ENCODE measurements at regions of chr10 and their contacts with region 1.

Region 1: GRCh38 chr10:51422311-51423120 is 276.9 kb downstream of the CSTF2T start:
- DNase-seq: peak; percentile 68 to 88 (median 77)
- H3K4me3 ChIP-seq: no peak overlapping the region
- H3K27ac ChIP-seq: peak overlapping the region in 3 of 5 donors; percentile 11 to 44 (median 13)
- H3K4me1 ChIP-seq: peaks cover 0 to 12% of the 10 kb centered on the region in 2 donors
- H3K27me3 ChIP-seq: no peaks in the 10 kb centered on the region
- CTCF ChIP-seq: peak; percentile 72 to 85 (median 78)
- POLR2A ChIP-seq: no peak

Region 2: DNA sequence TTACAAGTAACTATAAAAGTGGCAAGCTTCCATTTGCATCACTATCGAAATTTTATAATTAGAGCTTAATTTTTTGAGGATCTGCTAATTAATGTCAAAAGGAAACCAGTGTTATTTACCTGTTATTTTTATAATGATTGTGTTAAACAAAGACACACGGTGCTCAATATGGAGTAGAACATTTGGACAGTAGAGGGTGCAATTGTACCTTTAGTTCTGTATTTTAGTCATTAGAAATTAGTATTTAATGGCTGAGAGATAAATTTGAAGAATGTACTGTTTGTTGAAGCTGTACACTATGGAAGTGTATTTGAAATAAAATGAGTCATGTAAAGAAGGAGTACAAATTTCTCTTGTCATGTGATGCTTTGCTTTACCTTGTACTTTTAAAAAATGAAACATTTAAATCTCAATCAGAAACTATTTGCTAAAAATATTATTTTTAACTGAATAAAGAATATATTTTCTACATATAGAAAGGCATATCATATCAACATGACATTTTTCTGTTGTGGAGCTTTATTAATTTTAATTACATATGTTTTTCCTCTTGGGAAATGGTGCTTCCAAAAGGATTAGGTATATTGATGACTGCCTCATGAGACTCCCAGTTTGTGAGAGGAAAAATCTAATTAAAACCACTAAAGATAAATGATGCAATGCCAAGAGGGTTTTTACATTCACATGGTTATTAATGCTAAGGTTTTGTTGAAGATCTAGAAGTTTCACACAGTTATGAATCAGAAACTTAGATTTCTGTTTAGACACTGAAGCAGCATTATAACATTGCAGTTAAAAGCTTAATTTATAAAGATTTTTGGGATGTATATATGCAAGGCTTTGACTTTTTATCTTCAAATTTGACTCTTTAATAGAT is 358.6 kb before region 1 on chr10:
- intact Hi-C with region 1: loop called in 1 of 2 experiments (anchors 10 kb)
- DNase-seq: no peak
- H3K4me3 ChIP-seq: no peak overlapping the region
- H3K27ac ChIP-seq: no peak overlapping the region
- H3K4me1 ChIP-seq: no peaks in the 10 kb centered on the region
- H3K27me3 ChIP-seq: no peaks in the 10 kb centered on the region
- CTCF ChIP-seq: peak; percentile 26 to 77 (median 62)
- POLR2A ChIP-seq: no peak

Measured in adrenal gland (tissue), 19 donors.